ENCODE measurements at regions of chr14 and their contacts with region 1.

Region 1: DNA sequence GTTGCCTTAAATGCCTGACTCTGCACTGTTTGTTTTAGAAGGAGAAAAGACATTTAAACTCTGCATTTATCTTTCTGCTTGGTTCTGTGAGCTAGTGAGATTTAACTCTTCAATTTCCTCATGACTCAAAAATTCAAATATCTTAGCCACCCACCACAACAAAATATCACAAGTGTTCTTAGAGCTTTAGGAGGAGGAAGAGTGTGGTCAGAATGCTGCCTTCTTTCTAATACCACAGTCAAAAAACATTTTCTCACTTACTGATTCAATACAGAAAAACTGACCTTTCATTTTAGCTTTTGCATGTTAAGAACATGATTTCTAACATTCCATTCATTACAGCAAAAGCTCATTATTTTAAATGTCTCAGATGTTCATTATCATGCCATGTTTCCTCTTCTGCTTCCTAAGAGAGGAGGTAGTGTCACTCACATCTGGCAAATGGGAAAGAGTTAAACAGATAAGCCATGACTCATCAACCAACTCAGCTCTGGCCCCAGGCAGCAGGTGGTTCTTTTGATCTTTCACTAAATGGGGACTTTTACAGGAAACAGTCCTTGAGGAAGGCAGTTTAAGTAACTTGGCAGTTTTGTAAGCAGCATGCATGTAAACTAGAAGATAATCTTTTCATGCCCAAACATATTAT is 56.4 kb upstream of the RNU6-8 start:
- DNase-seq: peak; percentile 58
- H3K4me3 ChIP-seq: no peak overlapping the region
- H3K27ac ChIP-seq: peak overlapping the region in 1 of 2 experiments; percentile 58; a peak in 2 of 4 replicates
- H3K4me1 ChIP-seq: peaks cover 9 to 19% of the 10 kb centered on the region in 2 experiments; a peak in 3 of 4 replicates
- H3K27me3 ChIP-seq: no peaks in the 10 kb centered on the region
- CTCF ChIP-seq: no peak
- EP300 ChIP-seq: peak; percentile 70 to 83; a peak in 2 of 4 replicates
- RAD21 ChIP-seq: no peak; the same call in 1 of the 2 replicates

Region 2: GRCh38 chr14:31510222-31510621 is 749.3 kb before region 1 on chr14:
- CTCF ChIA-PET with region 1: interaction called, 44 read pairs
- POLR2A ChIA-PET with region 1: no interaction called
- DNase-seq: peak; percentile 33
- H3K4me3 ChIP-seq: no peak overlapping the region
- H3K27ac ChIP-seq: no peak overlapping the region
- H3K4me1 ChIP-seq: no peaks in the 10 kb centered on the region
- H3K27me3 ChIP-seq: no peaks in the 10 kb centered on the region
- CTCF ChIP-seq: peak; percentile 79
- EP300 ChIP-seq: no peak
- RAD21 ChIP-seq: peak; percentile 75

Region 3: DNA sequence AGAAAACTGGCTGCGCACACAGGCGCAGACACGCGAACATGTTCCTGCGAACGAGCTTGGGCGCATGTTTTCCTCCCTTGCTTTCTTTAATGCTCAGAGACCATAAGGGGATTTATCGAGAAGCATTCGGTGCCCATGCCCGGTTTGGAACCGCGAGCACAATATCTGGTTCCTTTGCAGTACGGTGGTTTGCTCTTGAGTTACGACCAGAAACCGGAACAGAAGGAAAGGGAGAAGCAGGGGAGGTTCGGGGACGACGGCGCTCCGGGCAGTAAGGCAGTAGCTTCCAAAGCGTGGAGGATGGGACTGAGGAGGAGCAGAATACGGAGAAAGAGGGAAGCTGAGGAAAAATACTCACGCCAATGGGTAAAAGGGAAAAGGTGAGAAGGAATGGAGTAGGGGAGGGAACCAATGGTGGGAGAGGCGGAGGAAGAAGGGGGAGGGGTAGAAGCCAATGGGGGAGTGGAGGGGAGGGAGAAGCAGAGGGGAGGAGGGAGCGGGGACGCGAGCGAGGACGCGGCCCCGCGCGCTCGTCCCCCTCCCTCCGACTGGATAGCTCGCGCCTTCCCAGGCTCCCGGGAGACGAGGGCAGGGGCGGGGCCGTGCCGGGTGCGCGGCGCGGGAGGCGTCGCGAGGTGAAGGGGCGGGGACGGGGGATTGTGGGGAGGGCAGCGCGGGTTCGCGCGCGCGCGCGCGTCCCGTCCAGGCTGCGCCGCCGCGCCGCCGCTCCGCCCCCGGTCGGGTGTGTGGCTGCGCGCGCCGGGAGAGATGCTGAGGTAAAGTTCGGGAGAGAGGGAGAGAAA is 183.0 kb before region 1 on chr14:
- CTCF ChIA-PET with region 1: interaction called, 169 read pairs
- POLR2A ChIA-PET with region 1: no interaction called
- DNase-seq: peak; percentile 94
- H3K4me3 ChIP-seq: peak overlapping the region; percentile 85 to 96
- H3K27ac ChIP-seq: peak overlapping the region; percentile 97 to 98
- H3K4me1 ChIP-seq: peaks cover 2 to 4% of the 10 kb centered on the region in 2 experiments; a peak in 1 of 4 replicates
- H3K27me3 ChIP-seq: no peaks in the 10 kb centered on the region
- CTCF ChIP-seq: no peak
- EP300 ChIP-seq: no peak
- RAD21 ChIP-seq: no peak

Region 4: GRCh38 chr14:32300136-32300535 is 40.6 kb after region 1 on chr14:
- CTCF ChIA-PET with region 1: no interaction called
- POLR2A ChIA-PET with region 1: no interaction called
- DNase-seq: no peak
- H3K4me3 ChIP-seq: no peak overlapping the region
- H3K27ac ChIP-seq: no peak overlapping the region
- H3K4me1 ChIP-seq: peaks cover 0 to 11% of the 10 kb centered on the region in 2 experiments; a peak in 2 of 4 replicates
- H3K27me3 ChIP-seq: no peaks in the 10 kb centered on the region
- CTCF ChIP-seq: no peak
- EP300 ChIP-seq: no peak
- RAD21 ChIP-seq: no peak

Region 5: DNA sequence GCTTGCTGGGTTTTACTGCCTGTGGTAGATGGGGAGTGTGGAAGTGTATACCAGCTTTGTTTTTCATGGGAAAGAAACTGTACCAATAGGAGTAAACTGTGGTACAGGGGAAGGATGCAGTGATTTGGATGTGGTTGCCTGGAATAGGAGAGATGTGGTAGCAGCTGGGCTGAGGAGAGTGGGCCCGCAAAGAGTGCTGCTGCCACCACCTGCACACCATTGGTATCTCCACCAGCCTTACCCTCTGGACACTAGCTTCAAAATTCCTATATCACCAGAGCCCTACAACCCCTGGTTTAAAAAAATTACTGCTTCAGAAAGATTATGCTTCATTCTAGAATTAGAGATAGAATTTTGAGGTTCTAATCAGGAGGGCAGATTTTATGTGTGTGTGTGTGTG is 123.2 kb after region 1 on chr14:
- CTCF ChIA-PET with region 1: interaction called, 58 read pairs
- POLR2A ChIA-PET with region 1: no interaction called
- DNase-seq: peak; percentile 34
- H3K4me3 ChIP-seq: no peak overlapping the region
- H3K27ac ChIP-seq: no peak overlapping the region
- H3K4me1 ChIP-seq: peaks cover 0 to 1% of the 10 kb centered on the region in 2 experiments; a peak in 1 of 4 replicates
- H3K27me3 ChIP-seq: no peaks in the 10 kb centered on the region
- CTCF ChIP-seq: peak; percentile 72
- EP300 ChIP-seq: no peak
- RAD21 ChIP-seq: peak; percentile 88

Measured in SK-N-SH (cell line).